Sigmoid colon (tissue), 7 donors: ENCODE measurements at regions of chr6 and their contacts with region 1.

Region 1: DNA sequence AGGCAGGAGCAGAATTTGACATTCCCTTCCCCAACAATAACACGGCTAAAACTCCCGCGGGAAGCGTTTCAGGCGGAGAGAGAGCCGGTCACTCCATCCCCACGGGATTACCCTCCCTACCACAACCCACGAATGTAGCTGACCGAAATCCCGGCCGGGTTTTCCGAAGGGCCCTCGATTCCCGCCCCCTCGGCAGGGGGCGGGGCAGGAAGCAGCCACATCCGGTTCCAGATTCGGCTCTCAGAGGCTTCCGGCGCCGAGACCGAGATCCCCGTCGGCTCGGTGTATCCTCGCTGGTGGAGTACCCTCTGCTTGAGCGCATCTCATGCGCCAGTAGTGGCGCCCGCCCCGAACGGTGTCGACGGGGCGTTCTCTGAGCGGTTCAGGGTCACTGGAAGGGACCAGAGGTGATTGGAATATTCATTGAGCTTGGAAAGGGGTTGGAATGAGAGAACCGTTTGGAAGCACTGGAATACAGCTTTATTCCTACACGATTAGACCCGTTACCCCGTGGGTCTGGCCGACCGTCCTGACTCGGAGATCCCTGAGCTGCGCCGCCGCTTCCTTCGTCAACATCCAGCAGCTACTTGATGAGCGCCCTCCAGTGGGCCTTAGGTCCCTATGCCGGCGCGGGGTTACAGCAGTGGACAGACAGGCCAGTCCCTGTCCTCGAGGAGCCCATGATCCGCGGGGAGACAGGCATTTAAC is 649 bp upstream of the RGL2 start:
- DNase-seq: peak; percentile 96
- H3K4me3 ChIP-seq: peak overlapping the region; percentile 62 to 93 (median 84)
- H3K27ac ChIP-seq: peak overlapping the region; percentile 95 to 98 (median 97)
- H3K4me1 ChIP-seq: peaks cover 0 to 37% (median 24%) of the 10 kb centered on the region in 4 donors
- H3K27me3 ChIP-seq: no peaks in the 10 kb centered on the region
- CTCF ChIP-seq: peak; percentile 39 to 79 (median 72)
- EP300 ChIP-seq: peak in 1 of 4 donors; percentile 21
- POLR2A ChIP-seq: peak; percentile 69 to 80

Region 2: DNA sequence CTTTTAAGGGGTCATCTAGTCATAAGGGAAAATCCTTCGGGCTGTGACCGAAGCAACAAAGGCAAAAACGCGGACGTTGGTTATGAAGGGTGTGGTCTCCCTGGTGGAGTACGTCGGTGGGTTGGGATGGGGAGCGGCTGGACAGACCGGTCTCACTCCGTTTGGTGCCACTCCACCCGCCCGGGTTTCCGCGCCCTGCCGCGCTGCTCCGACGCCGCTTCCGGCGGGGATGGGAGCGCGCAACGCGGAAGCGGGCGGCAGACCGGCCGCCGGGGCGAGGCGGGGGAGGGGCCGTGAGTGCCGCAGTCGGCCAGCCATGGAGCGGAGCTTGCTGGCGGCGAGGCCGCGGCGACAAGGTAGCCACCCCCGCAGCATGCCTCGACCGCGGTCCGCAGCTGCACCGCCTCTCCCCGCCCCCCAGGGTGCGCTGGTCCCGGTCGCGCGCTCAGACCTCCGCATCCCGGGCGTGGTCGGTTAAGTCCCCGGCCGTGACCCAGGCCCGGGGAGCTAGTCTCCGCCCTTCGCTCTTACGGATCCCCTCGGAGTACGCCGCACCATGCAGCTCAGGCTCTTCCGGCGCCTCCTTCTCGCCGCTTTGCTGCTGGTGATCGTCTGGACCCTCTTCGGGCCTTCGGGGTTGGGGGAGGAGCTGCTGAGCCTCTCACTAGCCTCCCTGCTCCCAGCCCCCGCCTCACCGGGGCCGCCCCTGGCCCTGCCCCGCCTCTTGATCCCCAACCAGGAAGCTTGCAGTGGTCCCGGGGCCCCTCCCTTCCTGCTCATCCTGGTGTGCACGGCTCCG is 22.3 kb before region 1 on chr6 and contains the start of gene B3GALT4:
- intact Hi-C with region 1: loop called (anchors 2 kb)
- DNase-seq: peak; percentile 91
- H3K4me3 ChIP-seq: peak within 1 kb of the TSS; percentile 48 to 87 (median 64)
- H3K27ac ChIP-seq: peak within 1 kb of the TSS; percentile 90 to 94 (median 93)
- H3K4me1 ChIP-seq: peaks cover 0 to 60% (median 56%) of the 10 kb centered on the region in 4 donors
- H3K27me3 ChIP-seq: no peaks in the 10 kb centered on the region
- CTCF ChIP-seq: peak; percentile 13 to 52 (median 29)
- EP300 ChIP-seq: no peak
- POLR2A ChIP-seq: peak; percentile 27 to 40
- total RNA-seq, gene B3GALT4: 7.2 to 22.2 (median 13.3) TPM

Region 3: DNA sequence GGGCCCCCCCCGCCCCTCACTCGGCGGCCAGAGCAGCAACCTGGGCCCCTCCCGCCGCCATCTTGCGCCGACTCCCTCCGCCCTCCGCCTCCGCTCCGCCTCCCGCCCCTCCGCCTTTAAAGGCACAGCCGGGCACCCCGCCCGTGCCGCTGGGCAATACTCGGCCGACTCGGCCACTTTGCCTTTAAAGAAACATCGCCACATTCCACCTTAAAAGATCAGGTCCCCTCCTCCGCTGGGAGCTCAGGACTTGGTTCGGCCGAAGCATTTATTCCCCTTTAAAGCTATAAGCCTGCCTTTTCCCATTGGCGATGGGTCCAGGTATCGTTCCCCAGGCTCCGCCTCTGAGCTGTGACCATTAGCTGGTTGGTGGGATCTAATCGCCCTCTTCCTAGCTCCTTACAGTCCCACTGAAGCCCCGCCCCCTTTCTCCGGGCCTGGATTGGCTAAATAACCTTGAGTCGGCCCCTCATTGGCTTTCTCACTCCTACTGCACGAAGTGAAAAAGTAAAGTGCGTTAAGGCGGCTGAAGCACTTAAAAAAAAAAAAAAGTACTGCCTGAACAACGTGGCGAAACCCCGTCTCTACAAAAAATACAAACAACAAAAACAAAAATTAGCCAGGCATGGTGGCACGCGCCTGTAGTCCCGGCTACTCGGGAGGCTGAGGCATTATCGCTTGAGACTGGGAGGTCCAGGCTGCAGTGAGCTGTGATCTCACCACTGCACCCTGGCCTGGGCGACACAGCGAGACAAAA is 18.5 kb after region 1 on chr6 and contains the start of gene ZBTB22:
- intact Hi-C with region 1: loop called (anchors 1 kb)
- DNase-seq: peak; percentile 100
- H3K4me3 ChIP-seq: peak within 1 kb of the TSS; percentile 43 to 59 (median 54)
- H3K27ac ChIP-seq: peak within 1 kb of the TSS; percentile 84 to 87 (median 84)
- H3K4me1 ChIP-seq: peaks cover 0 to 78% (median 62%) of the 10 kb centered on the region in 4 donors
- H3K27me3 ChIP-seq: no peaks in the 10 kb centered on the region
- CTCF ChIP-seq: no peak
- EP300 ChIP-seq: no peak
- POLR2A ChIP-seq: no peak
- total RNA-seq, gene ZBTB22: 9.4 to 13.2 (median 12.7) TPM

Region 4: DNA sequence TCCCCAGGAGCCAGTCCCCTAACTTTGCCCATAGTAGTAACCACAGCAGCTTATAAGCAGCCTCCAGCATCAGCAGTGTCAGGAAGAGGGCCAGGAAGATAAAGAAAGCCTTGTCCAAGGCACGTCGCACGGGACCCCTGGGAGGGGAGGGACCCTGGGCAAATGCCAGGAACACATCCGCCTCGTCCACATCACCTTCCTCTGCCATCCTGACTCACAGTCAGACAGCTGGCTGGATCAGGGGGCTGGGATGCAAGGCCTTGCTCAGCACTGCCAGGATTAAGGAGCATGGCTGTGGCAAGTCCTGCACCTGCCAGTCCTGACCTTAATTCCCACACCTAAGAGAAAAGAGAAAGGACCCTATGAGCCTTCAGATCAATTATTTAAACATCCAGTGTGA is 29.7 kb after region 1 on chr6:
- intact Hi-C with region 1: no loop called
- DNase-seq: no peak
- H3K4me3 ChIP-seq: no peak overlapping the region
- H3K27ac ChIP-seq: no peak overlapping the region
- H3K4me1 ChIP-seq: peaks cover 0 to 2% (median under 1%) of the 10 kb centered on the region in 4 donors
- H3K27me3 ChIP-seq: no peaks in the 10 kb centered on the region
- CTCF ChIP-seq: no peak
- EP300 ChIP-seq: no peak
- POLR2A ChIP-seq: no peak

Region 5: DNA sequence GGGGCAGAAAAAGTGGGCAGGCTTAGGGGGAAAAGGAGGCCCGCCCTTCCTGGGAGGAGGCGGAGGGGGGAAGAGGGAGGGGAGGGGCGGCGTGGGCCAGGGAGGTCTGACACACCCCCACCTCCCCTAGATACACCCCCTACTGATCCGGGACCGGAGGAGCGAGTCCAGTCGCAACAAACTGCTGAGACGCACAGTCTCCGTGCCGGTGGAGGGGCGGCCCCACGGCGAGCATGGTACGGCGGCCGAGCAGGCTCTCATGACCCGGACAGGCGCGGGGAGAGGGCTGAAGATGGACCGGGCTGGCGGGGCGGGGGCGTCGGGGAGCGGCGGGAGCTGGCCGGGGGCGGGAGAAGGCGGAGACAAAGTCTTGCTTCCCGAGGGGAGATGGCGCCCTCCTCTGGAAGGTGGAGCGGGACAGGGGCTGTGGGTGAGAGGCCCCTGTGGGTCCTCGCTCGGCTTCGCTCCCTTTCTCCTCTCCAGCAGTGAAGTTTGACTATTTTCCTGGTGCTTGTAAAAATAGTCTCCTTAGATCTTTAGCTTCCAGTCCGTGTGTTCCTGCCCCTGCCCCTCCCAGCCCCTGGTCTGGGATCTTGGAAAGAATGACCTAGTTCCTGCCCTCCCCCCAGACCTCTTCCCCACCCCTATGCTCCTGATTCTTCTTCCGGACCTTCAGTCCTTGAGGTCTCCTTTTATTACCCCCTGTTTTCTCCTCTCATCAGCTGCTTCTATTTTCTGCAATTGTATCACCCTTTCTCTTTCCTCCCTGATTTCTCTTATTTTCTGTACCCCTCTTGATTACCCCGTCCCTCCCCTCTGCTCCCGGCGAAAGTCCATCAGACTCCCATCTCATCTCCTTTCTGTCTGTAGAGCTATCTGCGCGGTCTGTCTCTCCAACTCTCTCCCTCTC is 126.5 kb after region 1 on chr6:
- intact Hi-C with region 1: loop called (anchors 5 kb)
- DNase-seq: peak; percentile 95
- H3K4me3 ChIP-seq: peak overlapping the region; percentile 35 to 64 (median 54)
- H3K27ac ChIP-seq: peak overlapping the region; percentile 87 to 93 (median 91)
- H3K4me1 ChIP-seq: peaks cover 0 to 59% (median 55%) of the 10 kb centered on the region in 4 donors
- H3K27me3 ChIP-seq: no peaks in the 10 kb centered on the region
- CTCF ChIP-seq: peak in 2 of 4 experiments; percentile 44 to 65
- EP300 ChIP-seq: peak in 1 of 4 donors; percentile 46
- POLR2A ChIP-seq: peak in 1 of 2 donors; percentile 26

Region 6: GRCh38 chr6:33513213-33513612 is 213.8 kb after region 1 on chr6:
- intact Hi-C with region 1: no loop called
- DNase-seq: no peak
- H3K4me3 ChIP-seq: no peak overlapping the region
- H3K27ac ChIP-seq: no peak overlapping the region
- H3K4me1 ChIP-seq: no peaks in the 10 kb centered on the region
- H3K27me3 ChIP-seq: peaks cover 0 to 10% (median 0%) of the 10 kb centered on the region in 3 donors
- CTCF ChIP-seq: no peak
- EP300 ChIP-seq: no peak
- POLR2A ChIP-seq: no peak